Heart left ventricle (tissue), 16 donors: ENCODE measurements at regions of chr1 and their contacts with region 1.

Region 1: GRCh38 chr1:149962123-149962548 is 25.5 kb upstream of the MTMR11 start:
- DNase-seq: peak in 3 of 5 donors; percentile 34 to 45 (median 45)
- ATAC-seq: peak; percentile 74 to 91 (median 83)
- H3K4me3 ChIP-seq: no peak overlapping the region
- H3K27ac ChIP-seq: peak overlapping the region in 8 of 12 donors; percentile 21 to 47 (median 42)
- H3K4me1 ChIP-seq: peaks cover 0 to 24% (median 7%) of the 10 kb centered on the region in 12 donors
- H3K27me3 ChIP-seq: peaks cover 0 to 6% (median 0%) of the 10 kb centered on the region in 9 donors
- CTCF ChIP-seq: peak; percentile 69 to 87 (median 81)
- POLR2A ChIP-seq: no peak

Region 2: DNA sequence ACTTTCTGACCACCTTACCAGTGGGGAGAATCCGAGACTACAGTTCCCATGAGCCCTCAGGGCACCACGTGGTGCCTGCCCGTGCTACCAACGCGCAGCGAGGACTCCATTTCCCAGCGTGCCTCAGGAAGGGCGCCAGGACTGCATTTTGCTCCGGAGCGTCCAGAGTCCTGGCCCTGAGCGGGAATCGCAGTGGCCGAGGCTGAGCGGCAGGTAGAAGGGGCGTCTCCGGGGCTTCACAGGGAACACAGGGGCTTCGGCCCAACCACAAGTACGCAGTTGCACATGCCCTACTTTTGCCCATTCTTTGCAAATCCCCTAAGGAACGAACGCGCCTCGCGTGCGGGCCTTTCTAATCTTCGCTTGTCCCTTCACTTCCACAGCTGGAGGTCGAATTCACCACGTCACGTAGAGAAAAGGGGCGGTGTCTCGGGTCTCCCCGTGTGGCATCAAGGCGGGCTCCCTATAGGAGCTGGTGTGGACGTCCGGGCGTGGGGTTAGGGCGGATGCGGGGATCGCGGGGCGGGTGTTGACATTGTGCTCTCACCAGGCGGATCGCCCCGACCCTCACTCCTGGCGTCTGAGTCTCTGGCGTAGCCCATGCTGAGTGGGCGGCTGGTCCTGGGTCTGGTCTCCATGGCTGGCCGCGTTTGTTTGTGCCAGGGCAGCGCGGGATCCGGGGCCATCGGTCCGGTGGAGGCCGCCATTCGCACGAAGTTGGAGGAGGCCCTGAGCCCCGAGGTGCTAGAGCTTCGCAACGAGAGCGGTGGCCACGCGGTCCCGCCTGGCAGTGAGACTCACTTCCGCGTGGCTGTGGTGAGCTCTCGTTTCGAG is 62.5 kb before region 1 on chr1 and contains the start of gene BOLA1:
- intact Hi-C with region 1: no loop called
- DNase-seq: peak; percentile 94 to 97 (median 95)
- ATAC-seq: peak; percentile 99 to 100 (median 100)
- H3K4me3 ChIP-seq: peak within 1 kb of the TSS; percentile 35 to 78 (median 64)
- H3K27ac ChIP-seq: peak within 1 kb of the TSS; percentile 31 to 95 (median 87)
- H3K4me1 ChIP-seq: peaks cover 0 to 13% (median 7%) of the 10 kb centered on the region in 12 donors
- H3K27me3 ChIP-seq: no peaks in the 10 kb centered on the region
- CTCF ChIP-seq: no peak
- POLR2A ChIP-seq: peak in 1 of 2 donors; percentile 87
- total RNA-seq, gene BOLA1: 12.5 to 39.4 (median 14.0) TPM

Region 3: GRCh38 chr1:150010393-150011115 is 48.4 kb after region 1 on chr1 and contains the start of gene OTUD7B:
- intact Hi-C with region 1: loop called in 1 of 10 experiments (anchors 5 kb)
- DNase-seq: peak; percentile 89 to 93 (median 90)
- ATAC-seq: peak; percentile 85 to 97 (median 96)
- H3K4me3 ChIP-seq: peak within 1 kb of the TSS; percentile 62 to 97 (median 89)
- H3K27ac ChIP-seq: peak within 1 kb of the TSS; percentile 75 to 98 (median 93)
- H3K4me1 ChIP-seq: peaks cover 2 to 43% (median 27%) of the 10 kb centered on the region in 12 donors
- H3K27me3 ChIP-seq: peaks cover 0 to 64% (median 0%) of the 10 kb centered on the region in 9 donors
- CTCF ChIP-seq: peak in 1 of 12 donors; percentile 10
- POLR2A ChIP-seq: peak in 1 of 2 donors; percentile 84
- total RNA-seq, gene OTUD7B: 16.4 to 36.2 (median 28.0) TPM

Region 4: DNA sequence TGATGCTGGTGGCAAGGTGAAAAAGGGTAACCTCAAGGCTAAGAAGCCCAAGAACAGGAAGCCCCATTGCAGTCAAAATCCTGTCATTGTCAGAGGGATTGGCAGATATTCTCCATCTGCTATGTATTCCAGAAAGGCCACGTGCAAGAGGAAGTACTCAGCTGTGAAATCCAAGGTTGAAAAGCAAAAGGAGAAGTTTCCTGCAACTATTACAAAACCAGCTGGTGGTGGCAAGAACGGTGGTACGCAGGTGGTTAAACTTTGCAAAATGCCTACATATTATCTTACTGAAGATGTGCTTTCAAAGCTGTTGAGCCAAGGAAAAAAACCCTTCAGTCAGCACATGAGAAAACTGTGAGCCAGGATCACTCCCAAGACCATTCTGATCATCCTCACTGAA is 91.8 kb after region 1 on chr1:
- intact Hi-C with region 1: loop called (anchors 1 to 5 kb)
- DNase-seq: no peak
- ATAC-seq: no peak
- H3K4me3 ChIP-seq: no peak overlapping the region
- H3K27ac ChIP-seq: no peak overlapping the region
- H3K4me1 ChIP-seq: peaks cover 0 to 20% (median 0%) of the 10 kb centered on the region in 12 donors
- H3K27me3 ChIP-seq: no peaks in the 10 kb centered on the region
- CTCF ChIP-seq: no peak
- POLR2A ChIP-seq: no peak

Region 5: GRCh38 chr1:150067184-150068036 is 105.3 kb after region 1 on chr1 and contains the start of gene VPS45:
- intact Hi-C with region 1: loop called in 1 of 10 experiments (anchors 5 kb)
- DNase-seq: peak; percentile 92 to 96 (median 93)
- ATAC-seq: peak; percentile 97 to 99 (median 98)
- H3K4me3 ChIP-seq: peak within 1 kb of the TSS; percentile 37 to 92 (median 78)
- H3K27ac ChIP-seq: peak within 1 kb of the TSS; percentile 80 to 98 (median 92)
- H3K4me1 ChIP-seq: peaks cover 0 to 49% (median 22%) of the 10 kb centered on the region in 12 donors
- H3K27me3 ChIP-seq: no peaks in the 10 kb centered on the region
- CTCF ChIP-seq: peak in 5 of 12 donors; percentile 5 to 45 (median 9)
- POLR2A ChIP-seq: peak in 1 of 2 donors; percentile 43
- total RNA-seq, gene VPS45: 39.1 to 67.7 (median 49.5) TPM

Region 6: DNA sequence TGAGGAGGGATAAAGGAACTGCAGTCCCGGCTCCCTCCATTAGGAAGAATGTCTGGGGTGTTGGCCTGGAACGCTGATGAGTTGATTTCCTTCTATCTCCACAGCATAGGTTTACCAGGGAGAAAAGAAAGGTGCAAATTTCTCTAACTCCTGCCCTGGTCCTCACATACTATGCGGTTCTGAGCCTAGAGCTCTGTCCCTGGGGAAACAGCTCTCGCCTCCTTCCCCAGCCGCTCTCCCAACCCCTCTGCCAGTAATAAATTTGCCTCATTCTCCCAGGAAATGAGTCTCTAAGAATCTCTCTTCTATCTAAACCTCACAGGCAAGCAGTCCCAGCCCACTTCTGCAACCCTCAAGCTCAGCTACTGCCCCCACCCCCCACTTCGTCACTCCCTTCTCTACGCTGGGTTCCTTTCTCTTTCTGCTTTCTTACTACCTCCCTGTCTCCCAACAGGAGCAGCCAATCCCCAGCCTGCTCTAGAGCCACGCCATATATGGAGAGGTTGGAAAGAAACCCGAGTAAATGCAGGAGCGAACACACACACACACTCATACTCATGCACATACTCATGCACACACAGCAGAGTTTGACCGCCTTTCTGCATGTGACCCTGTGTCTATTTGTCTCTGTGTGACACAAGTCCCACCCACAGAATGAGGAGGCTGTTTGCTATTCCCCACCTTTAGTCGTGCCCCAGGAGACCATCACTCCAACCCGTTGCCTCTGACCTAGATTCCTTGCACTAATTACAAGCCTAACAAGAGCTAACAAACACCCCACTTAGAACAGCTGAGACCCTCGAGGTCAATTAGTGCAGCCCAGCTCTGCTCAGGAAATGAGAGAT is 200.9 kb after region 1 on chr1:
- intact Hi-C with region 1: loop called in 9 of 10 experiments (anchors 2 to 10 kb)
- DNase-seq: peak; percentile 83 to 91 (median 89)
- ATAC-seq: peak; percentile 84 to 94 (median 92)
- H3K4me3 ChIP-seq: peak overlapping the region in 9 of 12 donors; percentile 24 to 55 (median 38)
- H3K27ac ChIP-seq: peak overlapping the region; percentile 43 to 98 (median 90)
- H3K4me1 ChIP-seq: peaks cover 0 to 82% (median 33%) of the 10 kb centered on the region in 12 donors
- H3K27me3 ChIP-seq: no peaks in the 10 kb centered on the region
- CTCF ChIP-seq: no peak
- POLR2A ChIP-seq: peak in 1 of 2 donors; percentile 70

Region 7: DNA sequence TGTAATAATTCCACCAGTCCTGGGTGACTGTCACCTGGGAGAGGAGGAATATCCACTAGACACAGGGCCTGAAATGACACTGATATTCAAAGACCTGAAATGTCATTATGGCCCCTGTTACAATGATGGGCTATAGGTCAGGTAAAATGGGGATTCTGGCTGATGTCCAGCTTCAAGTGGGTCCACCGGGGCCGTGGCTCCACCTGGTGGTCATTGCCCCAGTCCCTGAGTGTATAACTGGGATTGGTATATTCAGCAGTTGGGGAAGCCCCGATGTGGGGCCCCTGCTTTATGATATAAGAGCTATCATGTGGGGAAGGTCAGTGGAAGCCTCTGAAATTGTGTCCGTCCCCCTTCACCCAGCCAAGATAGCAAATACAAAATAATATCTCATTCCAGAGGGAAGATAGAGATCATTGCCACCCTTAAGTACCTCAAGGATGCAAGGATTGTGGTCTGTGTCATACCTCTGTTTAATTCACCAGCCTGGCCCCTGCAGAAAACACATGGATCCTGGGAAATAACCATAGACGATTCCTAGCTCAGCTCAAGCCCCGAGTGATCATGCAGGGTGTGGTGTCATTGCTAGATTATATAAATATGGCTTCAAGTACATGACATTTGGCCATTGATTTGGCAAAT is 206.9 kb after region 1 on chr1:
- intact Hi-C with region 1: loop called (anchors 1 to 10 kb)
- DNase-seq: peak; percentile 66 to 85 (median 72)
- ATAC-seq: peak in 3 of 4 donors; percentile 69 to 78 (median 70)
- H3K4me3 ChIP-seq: no peak overlapping the region
- H3K27ac ChIP-seq: no peak overlapping the region
- H3K4me1 ChIP-seq: peaks cover 0 to 28% (median 7%) of the 10 kb centered on the region in 12 donors
- H3K27me3 ChIP-seq: no peaks in the 10 kb centered on the region
- CTCF ChIP-seq: peak; percentile 73 to 92 (median 82)
- POLR2A ChIP-seq: no peak

Region 8: DNA sequence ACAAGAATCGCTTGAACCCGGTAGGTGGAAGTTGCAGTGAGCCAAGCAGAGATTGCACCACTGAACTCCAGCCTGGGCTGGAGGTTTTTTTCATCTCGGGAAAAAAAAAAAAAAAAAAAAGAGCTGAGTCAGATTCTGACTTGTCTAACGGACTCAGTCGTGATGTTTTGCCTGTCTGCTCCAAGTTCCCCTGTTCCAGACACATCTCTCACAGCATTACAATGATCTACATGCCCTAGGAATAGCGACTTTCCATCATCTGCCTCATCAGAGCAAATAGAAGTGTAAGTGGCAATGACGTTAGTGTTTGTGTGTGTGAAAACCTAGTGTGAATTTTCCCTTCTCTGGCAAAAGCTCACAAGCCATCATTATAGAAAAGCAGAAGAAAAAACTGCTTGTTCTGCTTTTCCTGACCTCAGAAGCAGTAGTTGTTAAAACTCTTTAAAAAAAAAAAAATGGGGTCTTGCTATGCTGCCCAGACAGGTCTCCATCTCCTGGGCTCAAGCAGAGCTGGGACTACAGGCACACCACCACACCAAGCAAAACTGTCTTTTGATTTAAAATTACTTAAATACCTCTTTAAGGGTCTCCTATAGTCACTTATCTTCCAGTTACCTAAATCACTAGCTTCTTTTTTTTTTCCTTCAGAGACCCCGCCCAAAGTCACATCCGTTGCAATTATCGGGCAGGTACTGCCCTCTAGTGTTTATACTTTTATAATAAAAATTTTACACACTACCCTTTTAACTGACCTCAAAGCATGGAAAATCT is 224.8 kb after region 1 on chr1:
- intact Hi-C with region 1: loop called in 5 of 10 experiments (anchors 1 to 5 kb)
- DNase-seq: no peak
- ATAC-seq: peak; percentile 21 to 82 (median 66)
- H3K4me3 ChIP-seq: peak overlapping the region in 2 of 12 donors; percentile 11 to 28
- H3K27ac ChIP-seq: peak overlapping the region in 6 of 12 donors; percentile 1 to 91 (median 52)
- H3K4me1 ChIP-seq: peaks cover 0 to 26% (median 5%) of the 10 kb centered on the region in 12 donors
- H3K27me3 ChIP-seq: no peaks in the 10 kb centered on the region
- CTCF ChIP-seq: peak; percentile 46 to 71 (median 59)
- POLR2A ChIP-seq: no peak